Activated B cell treated with CpG ODN at 0.5 μM for 24 hours (primary cell): ENCODE measurements at regions of chr12 and their contacts with region 1.

Region 1: GRCh38 chr12:9634177-9634803 is 26.6 kb upstream of the KLRB1 start:
- DNase-seq: no peak
- ATAC-seq: peak; percentile 80
- H3K4me3 Mint-ChIP-seq: peak overlapping the region; percentile 66
- H3K27ac Mint-ChIP-seq: peak overlapping the region; percentile 86
- H3K4me1 Mint-ChIP-seq: peaks cover 60% of the 10 kb centered on the region
- H3K27me3 Mint-ChIP-seq: no peaks in the 10 kb centered on the region
- CTCF ChIP-seq: peak; percentile 57

Region 2: DNA sequence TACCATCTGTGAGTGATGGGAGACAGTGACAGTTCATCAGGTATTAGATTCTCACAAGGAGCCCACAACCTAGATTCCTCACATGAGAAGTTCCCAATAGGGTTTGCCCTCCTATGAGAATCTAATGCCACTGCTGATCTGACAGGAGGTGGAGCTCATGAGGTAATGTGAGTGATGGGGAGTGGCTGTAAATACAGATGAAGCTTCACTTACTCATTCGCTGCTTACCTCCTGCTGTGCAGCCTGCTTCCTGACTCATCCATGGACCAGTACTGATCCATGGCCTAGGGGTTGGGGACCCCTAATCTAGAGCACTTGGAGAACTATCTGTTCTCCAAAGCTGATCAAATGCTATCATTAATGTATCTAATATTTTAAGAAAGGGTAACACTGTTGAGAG is 52.9 kb after region 1 on chr12:
- CTCF ChIA-PET with region 1: interaction called, 5 read pairs
- POLR2A ChIA-PET with region 1: interaction called, 11 read pairs
- intact Hi-C with region 1: no loop called
- DNase-seq: no peak
- ATAC-seq: peak; percentile 29
- H3K4me3 Mint-ChIP-seq: no peak overlapping the region
- H3K27ac Mint-ChIP-seq: no peak overlapping the region
- H3K4me1 Mint-ChIP-seq: peaks cover 61% of the 10 kb centered on the region
- H3K27me3 Mint-ChIP-seq: no peaks in the 10 kb centered on the region
- CTCF ChIP-seq: no peak

Region 3: GRCh38 chr12:9707864-9708808 is 73.8 kb after region 1 on chr12:
- CTCF ChIA-PET with region 1: interaction called, 36 read pairs
- POLR2A ChIA-PET with region 1: interaction called, 7 read pairs
- intact Hi-C with region 1: loop called (anchors 1 kb)
- DNase-seq: no peak
- ATAC-seq: peak; percentile 50
- H3K4me3 Mint-ChIP-seq: peak overlapping the region; percentile 59
- H3K27ac Mint-ChIP-seq: peak overlapping the region; percentile 93
- H3K4me1 Mint-ChIP-seq: peaks cover 89% of the 10 kb centered on the region
- H3K27me3 Mint-ChIP-seq: no peaks in the 10 kb centered on the region
- CTCF ChIP-seq: peak; percentile 23

Region 4: DNA sequence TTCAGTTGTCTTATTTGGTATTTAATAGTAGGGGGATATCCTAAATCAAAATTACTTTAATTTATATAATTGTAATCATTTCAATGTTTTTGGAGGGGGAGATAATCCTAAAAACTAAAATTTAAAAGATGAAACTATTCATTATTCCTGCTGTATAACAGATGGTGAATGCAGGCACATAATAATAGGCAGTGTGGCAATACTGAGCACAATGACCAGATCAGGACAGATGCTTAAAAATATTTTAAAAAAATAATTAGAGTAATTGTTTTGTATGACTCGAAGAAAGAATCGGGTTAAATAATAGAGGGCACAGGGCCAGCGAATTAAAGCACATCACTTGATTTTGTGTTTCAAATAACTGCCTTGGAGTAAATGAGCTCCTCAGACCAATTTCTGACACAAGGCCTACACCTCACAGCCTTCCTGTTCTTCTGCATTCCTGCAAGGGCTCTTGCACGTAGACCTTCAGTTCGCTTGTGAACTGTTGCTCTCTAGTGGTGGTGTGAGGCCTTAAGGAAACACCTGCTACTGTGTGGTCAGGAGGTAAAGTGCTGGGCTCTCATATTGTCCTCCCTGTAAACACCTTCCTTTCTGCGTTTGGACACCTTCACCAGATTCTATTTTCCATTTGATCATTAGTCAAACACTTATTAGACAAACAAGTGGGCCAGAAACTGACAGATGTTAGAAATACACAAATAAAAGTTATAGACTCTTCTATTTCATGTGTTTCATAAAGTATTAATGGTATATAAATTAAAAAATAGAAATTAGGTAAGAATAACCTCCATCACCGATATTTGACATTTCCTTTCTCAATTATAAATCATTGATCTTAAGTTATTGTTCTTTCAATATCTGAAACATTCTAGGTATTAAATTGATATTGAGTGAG is 163.7 kb after region 1 on chr12:
- CTCF ChIA-PET with region 1: interaction called, 10 read pairs
- POLR2A ChIA-PET with region 1: no interaction called
- intact Hi-C with region 1: loop called (anchors 1 kb)
- DNase-seq: no peak
- ATAC-seq: peak; percentile 96
- H3K4me3 Mint-ChIP-seq: no peak overlapping the region
- H3K27ac Mint-ChIP-seq: no peak overlapping the region
- H3K4me1 Mint-ChIP-seq: peaks cover 34% of the 10 kb centered on the region
- H3K27me3 Mint-ChIP-seq: no peaks in the 10 kb centered on the region
- CTCF ChIP-seq: no peak

Region 5: GRCh38 chr12:9843416-9843815 is 209.1 kb after region 1 on chr12:
- CTCF ChIA-PET with region 1: no interaction called
- POLR2A ChIA-PET with region 1: no interaction called
- intact Hi-C with region 1: no loop called
- DNase-seq: no peak
- ATAC-seq: no peak
- H3K4me3 Mint-ChIP-seq: no peak overlapping the region
- H3K27ac Mint-ChIP-seq: no peak overlapping the region
- H3K4me1 Mint-ChIP-seq: no peaks in the 10 kb centered on the region
- H3K27me3 Mint-ChIP-seq: peaks cover 4% of the 10 kb centered on the region
- CTCF ChIP-seq: no peak

Region 6: GRCh38 chr12:9925708-9926393 is 291.6 kb after region 1 on chr12:
- CTCF ChIA-PET with region 1: no interaction called
- POLR2A ChIA-PET with region 1: no interaction called
- intact Hi-C with region 1: loop called (anchors 1 kb)
- DNase-seq: no peak
- ATAC-seq: peak; percentile 40
- H3K4me3 Mint-ChIP-seq: peak overlapping the region; percentile 62
- H3K27ac Mint-ChIP-seq: no peak overlapping the region
- H3K4me1 Mint-ChIP-seq: peaks cover 4% of the 10 kb centered on the region
- H3K27me3 Mint-ChIP-seq: peaks cover 12% of the 10 kb centered on the region
- CTCF ChIP-seq: no peak

Region 7: DNA sequence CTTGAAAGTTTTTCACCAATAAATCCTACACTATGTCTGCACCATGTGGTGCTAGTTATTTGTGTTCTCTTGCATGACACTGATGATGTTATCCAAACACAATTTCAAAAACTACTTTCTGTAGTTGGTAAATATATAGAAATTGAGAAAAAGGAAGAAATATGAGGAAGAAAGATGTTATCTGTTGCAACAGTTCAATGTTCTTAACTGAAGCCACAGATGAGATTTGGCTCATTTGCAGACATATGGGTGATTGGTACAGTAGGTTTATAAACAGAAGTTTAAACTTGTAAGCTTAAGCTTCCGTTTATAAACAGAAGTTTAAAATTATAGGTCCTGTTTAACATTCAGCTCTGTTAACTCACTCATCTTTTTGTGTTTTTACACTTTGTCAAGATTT is 336.9 kb after region 1 on chr12 and contains the start of gene CLEC12A:
- CTCF ChIA-PET with region 1: no interaction called
- POLR2A ChIA-PET with region 1: no interaction called
- intact Hi-C with region 1: no loop called
- DNase-seq: no peak
- ATAC-seq: no peak
- H3K4me3 Mint-ChIP-seq: no peak within 1 kb of the TSS
- H3K27ac Mint-ChIP-seq: no peak within 1 kb of the TSS
- H3K4me1 Mint-ChIP-seq: no peaks in the 10 kb centered on the region
- H3K27me3 Mint-ChIP-seq: peaks cover 21% of the 10 kb centered on the region
- CTCF ChIP-seq: no peak
- total RNA-seq, gene CLEC12A: 0.22 TPM in 1 of 2 replicates, not detected in the other